GM13977 (cell line): ENCODE measurements at regions of chr3 and their contacts with region 1.

Region 1: GRCh38 chr3:40580494-40581091 is 55.8 kb downstream of the ZNF621 start:
- DNase-seq: peak; percentile 66
- CTCF ChIP-seq: peak; percentile 93

Region 2: DNA sequence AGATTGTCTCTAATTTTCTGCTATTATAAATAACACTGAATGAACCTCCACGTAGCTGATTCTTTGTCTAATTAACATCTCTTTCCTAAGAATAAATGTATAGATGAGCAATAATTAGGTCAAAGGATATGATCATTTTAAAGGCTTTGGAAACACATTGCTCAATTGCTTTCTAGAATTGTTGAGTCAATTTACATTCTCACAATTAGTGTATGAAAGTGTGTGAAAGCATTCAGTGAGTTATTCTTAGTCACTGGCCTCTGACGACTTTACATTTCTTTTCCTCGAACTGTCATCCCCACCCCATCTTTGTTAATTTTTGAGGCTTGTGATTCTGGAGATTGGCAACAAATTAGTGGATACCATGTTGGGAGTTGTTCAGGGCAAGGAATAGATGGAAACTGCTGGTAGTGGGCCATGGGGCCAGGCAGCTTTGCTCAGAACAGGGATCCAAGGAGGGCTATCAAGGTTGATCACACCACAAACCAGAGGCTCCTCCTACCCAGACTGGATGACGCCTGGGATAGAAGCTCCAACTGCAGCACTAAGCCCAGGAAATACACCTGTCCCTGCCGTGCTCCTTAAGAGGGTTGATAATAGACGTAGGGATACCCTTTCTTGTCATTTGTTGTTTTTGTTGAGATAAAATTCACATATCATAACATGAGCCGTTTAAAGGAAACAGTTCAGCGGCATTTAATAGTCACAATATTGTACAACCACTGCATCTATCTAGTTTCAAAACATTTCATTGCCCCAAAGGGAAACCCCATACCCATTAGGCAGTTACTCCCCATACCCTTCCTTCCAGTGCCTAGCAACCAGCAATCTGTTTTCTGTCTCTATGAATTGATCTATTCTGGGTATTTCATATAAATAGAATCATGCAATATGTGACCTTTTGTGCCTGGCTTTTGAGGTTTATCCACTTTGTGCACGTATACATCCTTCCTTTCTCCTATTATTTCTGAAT is 243.2 kb before region 1 on chr3:
- in situ Hi-C with region 1: loop called (anchors 25 kb)
- DNase-seq: peak; percentile 38
- CTCF ChIP-seq: no peak

Region 3: DNA sequence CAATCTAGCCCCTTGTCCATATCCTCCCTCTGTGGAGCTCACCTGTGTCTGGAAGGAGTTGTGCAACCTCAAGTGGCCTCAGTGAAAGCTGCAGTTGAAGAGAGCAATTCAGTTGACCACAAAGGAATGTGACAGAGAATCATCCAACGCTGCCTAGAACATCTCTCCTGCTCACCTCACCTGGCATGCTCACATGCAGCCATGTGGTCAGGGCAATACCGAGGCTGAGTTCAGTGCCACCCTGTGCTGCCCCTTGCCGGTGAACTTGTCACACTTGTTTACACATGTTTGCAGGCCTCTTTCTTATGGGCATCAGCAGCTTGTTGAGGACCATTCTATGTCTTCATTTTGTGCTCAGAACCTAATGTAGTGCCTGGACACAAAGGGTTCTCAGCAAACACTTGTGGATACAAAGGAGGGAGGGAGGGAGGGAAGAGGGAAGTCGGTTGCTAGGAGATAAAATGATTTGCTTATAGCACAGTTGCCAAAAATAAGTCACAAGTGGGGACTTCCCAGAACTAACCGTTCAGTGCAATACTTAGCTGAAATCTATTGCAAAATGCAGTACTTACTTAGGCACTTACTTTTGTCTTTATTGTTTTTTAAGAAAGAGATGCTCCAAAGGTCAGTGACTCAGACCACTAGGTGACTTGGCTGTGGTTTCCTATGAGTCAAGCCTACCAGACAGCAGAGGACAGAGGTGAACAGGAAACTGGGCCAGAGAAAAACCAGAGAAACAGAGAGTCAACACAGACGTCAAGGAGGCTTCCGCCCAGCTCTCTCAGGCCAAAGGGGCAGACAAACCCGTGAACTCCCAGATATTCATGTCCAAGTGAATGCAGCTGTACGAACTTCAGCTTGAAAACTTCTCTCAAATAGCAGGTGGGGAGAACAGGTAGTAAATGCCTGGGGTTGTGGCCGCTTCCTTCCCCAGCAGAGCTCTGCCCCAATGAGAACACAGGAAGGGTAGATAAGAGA is 390.9 kb after region 1 on chr3:
- in situ Hi-C with region 1: loop called (anchors 25 kb)
- DNase-seq: peak; percentile 66
- CTCF ChIP-seq: peak; percentile 47

Region 4: GRCh38 chr3:41872157-41872556 is 1291.6 kb after region 1 on chr3:
- in situ Hi-C with region 1: loop called (anchors 10 kb)
- DNase-seq: no peak
- CTCF ChIP-seq: no peak